Activated CD8-positive, alpha-beta memory T cell treated with anti-CD3 and anti-CD28 coated beads, Interleukin-2, amount 10 ng/mL, durations not matched to agents 7 days and 5 days (primary cell): ENCODE measurements at regions of chr10 and their contacts with region 1.

Region 1: DNA sequence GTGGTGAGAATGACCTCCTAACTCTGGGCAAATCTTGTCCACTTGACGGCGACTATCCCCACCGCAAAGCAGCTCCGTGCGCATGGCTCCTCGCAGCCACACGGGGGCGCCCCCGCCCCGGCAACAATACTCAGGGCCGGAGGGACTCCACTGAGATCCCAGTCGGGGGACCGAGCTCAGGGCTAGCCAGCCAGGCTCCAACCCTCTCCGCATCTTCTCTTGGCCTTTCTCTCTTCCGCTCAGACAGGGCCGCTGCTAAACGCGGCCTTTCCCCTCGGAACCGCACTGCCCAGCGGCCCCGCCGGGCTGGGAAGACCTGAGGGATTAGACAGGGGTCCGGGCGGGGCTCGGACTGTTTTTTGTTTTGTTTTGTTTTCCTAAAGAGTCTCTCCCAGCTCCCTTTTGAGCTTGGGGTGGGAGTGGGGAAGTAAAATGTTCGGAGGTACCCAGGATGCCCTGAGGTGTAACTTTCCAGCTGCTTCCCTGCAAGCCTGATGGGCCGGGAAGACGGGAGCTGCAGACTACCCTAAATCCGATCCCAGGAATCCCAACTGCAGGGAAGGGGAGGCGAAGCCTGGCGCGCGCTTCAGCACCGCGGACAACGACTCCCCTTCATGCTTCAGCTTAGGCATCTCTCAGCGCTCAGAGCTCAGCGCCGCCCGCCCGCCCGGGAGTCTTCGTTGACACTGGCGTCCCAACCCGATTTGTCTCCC is 2.7 kb downstream of the KCNIP2 start:
- DNase-seq: peak; percentile 86
- ATAC-seq: peak; percentile 77
- H3K4me3 Mint-ChIP-seq: peak overlapping the region; percentile 73
- H3K27ac Mint-ChIP-seq: peak overlapping the region; percentile 64
- H3K4me1 Mint-ChIP-seq: peaks cover 35% of the 10 kb centered on the region
- H3K27me3 Mint-ChIP-seq: peaks cover 12% of the 10 kb centered on the region

Region 2: GRCh38 chr10:101782811-101783735 is 57.8 kb before region 1 on chr10 and contains the start of gene NPM3:
- CTCF ChIA-PET with region 1: interaction called, 21 read pairs
- DNase-seq: peak; percentile 93
- ATAC-seq: peak; percentile 82
- H3K4me3 Mint-ChIP-seq: peak within 1 kb of the TSS; percentile 94
- H3K27ac Mint-ChIP-seq: peak within 1 kb of the TSS; percentile 96
- H3K4me1 Mint-ChIP-seq: peaks cover 55% of the 10 kb centered on the region
- H3K27me3 Mint-ChIP-seq: peaks cover 9% of the 10 kb centered on the region
- total RNA-seq, gene NPM3: 46.1 to 75.4 TPM

Region 3: GRCh38 chr10:101830322-101831168 is 10.4 kb before region 1 on chr10:
- CTCF ChIA-PET with region 1: interaction called, 19 read pairs
- DNase-seq: peak; percentile 93
- ATAC-seq: peak; percentile 82
- H3K4me3 Mint-ChIP-seq: peak overlapping the region; percentile 75
- H3K27ac Mint-ChIP-seq: peak overlapping the region; percentile 88
- H3K4me1 Mint-ChIP-seq: peaks cover 43% of the 10 kb centered on the region
- H3K27me3 Mint-ChIP-seq: no peaks in the 10 kb centered on the region

Region 4: GRCh38 chr10:101897633-101898032 is 56.7 kb after region 1 on chr10:
- CTCF ChIA-PET with region 1: interaction called, 61 read pairs
- DNase-seq: no peak
- ATAC-seq: no peak
- H3K4me3 Mint-ChIP-seq: no peak overlapping the region
- H3K27ac Mint-ChIP-seq: no peak overlapping the region
- H3K4me1 Mint-ChIP-seq: peaks cover 3% of the 10 kb centered on the region
- H3K27me3 Mint-ChIP-seq: no peaks in the 10 kb centered on the region

Region 5: DNA sequence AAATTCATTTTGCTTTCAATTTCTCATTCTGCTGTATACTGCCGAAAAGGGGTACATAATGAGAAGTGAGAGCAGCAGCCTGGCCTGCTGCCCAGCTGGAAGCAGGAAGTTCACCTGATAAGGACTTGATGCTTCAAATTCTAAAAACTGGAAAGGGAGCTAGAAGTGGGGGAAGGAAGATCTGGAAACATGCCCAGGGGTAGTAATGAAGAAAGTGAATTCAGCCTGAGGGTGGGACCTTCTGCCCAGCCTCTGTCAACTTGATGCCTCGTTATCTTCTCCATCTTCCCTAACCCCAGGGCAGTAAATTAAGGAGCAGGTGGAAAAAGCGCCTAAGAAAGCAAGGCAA is 145.7 kb after region 1 on chr10:
- CTCF ChIA-PET with region 1: no interaction called
- DNase-seq: no peak
- ATAC-seq: no peak
- H3K4me3 Mint-ChIP-seq: no peak overlapping the region
- H3K27ac Mint-ChIP-seq: no peak overlapping the region
- H3K4me1 Mint-ChIP-seq: no peaks in the 10 kb centered on the region
- H3K27me3 Mint-ChIP-seq: no peaks in the 10 kb centered on the region

Region 6: GRCh38 chr10:102004376-102004775 is 163.5 kb after region 1 on chr10:
- CTCF ChIA-PET with region 1: interaction called, 151 read pairs
- DNase-seq: no peak
- ATAC-seq: no peak
- H3K4me3 Mint-ChIP-seq: no peak overlapping the region
- H3K27ac Mint-ChIP-seq: no peak overlapping the region
- H3K4me1 Mint-ChIP-seq: peaks cover 16% of the 10 kb centered on the region
- H3K27me3 Mint-ChIP-seq: no peaks in the 10 kb centered on the region

Region 7: DNA sequence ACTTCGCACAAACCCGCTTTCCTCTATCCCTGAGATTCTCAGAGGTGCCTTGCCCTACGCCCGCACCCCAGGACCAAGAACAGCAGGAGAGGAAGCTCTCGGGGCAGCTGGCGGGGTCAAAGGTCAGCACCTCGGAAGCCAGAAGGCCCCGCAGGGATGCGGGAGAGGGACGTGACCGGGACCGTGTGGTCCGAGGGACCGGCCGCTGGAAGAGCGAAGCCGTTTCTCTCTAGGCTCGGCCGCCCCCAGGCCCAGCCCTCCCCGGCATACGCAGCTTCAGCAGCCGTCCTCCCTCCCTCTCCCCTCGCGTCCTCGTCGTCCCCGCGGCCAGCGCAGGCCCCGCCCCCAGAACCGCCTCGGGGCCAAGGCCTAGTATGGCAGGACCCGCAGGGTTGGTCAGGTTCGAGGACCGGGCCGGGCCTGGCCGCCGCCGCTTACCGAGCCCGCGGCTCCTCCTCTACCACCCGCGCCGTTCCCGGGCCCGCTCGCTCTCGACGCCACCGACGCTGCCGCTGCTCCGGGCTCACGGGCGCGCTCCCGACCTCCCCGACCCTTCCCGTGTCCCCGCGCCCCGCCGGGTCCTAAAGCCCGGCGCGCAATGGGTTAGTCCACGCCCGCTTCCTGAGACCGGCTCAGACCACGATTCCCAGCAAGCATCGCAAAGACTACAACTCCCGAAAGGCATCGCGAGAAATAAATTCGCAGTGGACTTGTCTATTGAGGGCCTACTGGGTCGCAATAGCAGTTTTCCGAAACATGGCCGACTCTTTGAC is 214.9 kb after region 1 on chr10 and contains the start of gene ARMH3:
- CTCF ChIA-PET with region 1: interaction called, 10 read pairs
- DNase-seq: peak; percentile 96
- ATAC-seq: peak; percentile 95
- H3K4me3 Mint-ChIP-seq: peak within 1 kb of the TSS; percentile 95
- H3K27ac Mint-ChIP-seq: peak within 1 kb of the TSS; percentile 93
- H3K4me1 Mint-ChIP-seq: peaks cover 40% of the 10 kb centered on the region
- H3K27me3 Mint-ChIP-seq: no peaks in the 10 kb centered on the region
- total RNA-seq, gene ARMH3: 23.8 to 25.9 TPM